Sigmoid colon (tissue), 7 donors: ENCODE measurements at regions of chr14 and their contacts with region 1.

Region 1: DNA sequence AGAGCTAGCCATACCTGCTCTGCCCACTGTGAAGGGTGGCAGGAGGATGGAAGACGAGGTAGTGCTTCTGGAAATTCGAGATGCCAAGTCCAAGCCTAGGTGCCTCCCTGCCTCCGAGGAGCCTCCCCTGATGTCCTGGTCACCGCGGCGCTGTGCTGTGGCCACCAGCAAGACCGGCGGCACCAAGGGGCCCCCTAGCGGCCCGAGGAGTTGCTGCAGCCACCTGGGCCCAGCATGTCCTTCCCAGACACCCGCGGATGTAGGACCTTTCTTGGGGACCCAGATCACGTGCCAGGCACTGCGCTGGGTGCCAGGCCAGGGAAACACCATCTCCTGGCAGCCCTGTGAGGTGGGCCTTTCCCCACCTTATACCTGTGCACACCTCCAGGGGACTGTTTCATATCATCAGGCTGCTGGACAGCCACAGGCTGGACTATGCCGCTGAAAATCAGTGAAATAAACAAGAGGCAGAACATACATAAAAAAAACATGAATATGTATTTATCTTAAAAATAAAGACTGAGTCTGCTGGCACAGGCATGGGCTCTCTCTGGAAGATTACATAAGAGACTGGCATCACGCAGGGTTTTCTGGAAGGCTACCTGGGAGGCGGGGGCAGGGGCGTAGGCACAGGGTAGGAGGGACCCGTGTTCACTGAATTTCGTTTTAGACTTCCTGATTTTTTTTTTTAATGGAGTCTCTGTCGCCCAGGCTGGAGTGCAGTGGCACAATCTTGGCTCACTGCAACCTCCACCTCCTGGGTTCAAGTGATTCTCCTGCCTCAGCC is 15.9 kb upstream of the HHIPL1 start:
- DNase-seq: peak; percentile 90
- H3K4me3 ChIP-seq: no peak overlapping the region
- H3K27ac ChIP-seq: no peak overlapping the region
- H3K4me1 ChIP-seq: peaks cover 4 to 18% (median 10%) of the 10 kb centered on the region in 4 donors
- H3K27me3 ChIP-seq: no peaks in the 10 kb centered on the region
- CTCF ChIP-seq: peak; percentile 91 to 98 (median 96)
- EP300 ChIP-seq: no peak
- POLR2A ChIP-seq: no peak

Region 2: GRCh38 chr14:99230208-99231151 is 398.5 kb before region 1 on chr14:
- intact Hi-C with region 1: no loop called
- DNase-seq: no peak
- H3K4me3 ChIP-seq: no peak overlapping the region
- H3K27ac ChIP-seq: no peak overlapping the region
- H3K4me1 ChIP-seq: peaks cover 0 to 10% (median 4%) of the 10 kb centered on the region in 4 donors
- H3K27me3 ChIP-seq: peaks cover 14 to 48% (median 29%) of the 10 kb centered on the region in 3 donors
- CTCF ChIP-seq: no peak
- EP300 ChIP-seq: no peak
- POLR2A ChIP-seq: no peak

Region 3: DNA sequence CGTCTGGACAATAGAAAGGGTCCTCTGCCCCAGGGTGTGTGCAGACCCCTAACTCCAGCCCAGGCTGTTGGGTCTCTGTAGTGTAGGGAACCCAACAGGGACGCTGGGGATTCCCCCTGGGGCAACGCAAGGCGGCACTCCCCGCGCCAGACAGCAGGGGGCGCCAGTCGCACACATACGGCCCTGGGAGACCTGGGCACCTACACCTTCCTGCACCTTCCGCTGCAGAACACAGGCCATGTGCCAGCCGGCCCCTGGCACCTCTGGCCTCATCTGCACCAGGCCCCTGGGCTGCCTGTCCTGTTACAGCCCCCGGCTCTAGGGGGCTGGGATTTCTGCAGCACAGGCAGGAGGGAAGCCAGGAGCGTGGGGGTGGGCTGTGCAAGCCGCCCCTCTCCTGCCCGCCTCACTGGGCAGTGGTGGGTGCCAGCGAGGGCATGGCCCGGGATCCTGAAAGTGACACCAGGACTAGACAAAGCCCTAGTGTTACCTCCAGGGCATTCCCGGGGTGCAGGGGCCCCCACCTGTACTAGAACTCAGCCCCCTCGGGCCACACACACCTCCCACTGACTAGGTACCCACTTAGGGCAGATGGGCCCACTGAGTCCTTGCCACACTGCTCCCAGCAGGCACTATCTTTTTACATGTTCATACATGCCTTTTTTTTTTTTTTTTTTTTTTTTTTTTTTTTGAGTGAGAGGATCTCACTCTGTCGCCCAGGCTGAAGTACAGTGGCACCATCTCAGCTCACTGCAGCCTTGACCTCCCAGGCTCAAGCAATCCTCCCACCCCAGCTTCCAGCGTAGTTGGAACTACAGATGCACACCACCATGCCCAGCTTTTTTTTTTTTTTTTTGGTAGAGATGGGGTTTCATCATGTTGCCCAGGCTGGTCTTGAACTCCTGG is 110.3 kb before region 1 on chr14:
- intact Hi-C with region 1: loop called (anchors 1 kb)
- DNase-seq: peak; percentile 87
- H3K4me3 ChIP-seq: no peak overlapping the region
- H3K27ac ChIP-seq: peak overlapping the region in 3 of 4 donors; percentile 40 to 90 (median 45)
- H3K4me1 ChIP-seq: peaks cover 0 to 49% (median 46%) of the 10 kb centered on the region in 4 donors
- H3K27me3 ChIP-seq: no peaks in the 10 kb centered on the region
- CTCF ChIP-seq: peak; percentile 93 to 99 (median 97)
- EP300 ChIP-seq: no peak
- POLR2A ChIP-seq: no peak